Activated CD8-positive, alpha-beta T cell treated with anti-CD3 and anti-CD28 coated beads, Interleukin-2, amount 10 ng/mL, durations not matched to agents 7 days and 5 days (primary cell): ENCODE measurements at regions of chr15 and their contacts with region 1.

Region 1: GRCh38 chr15:48975472-48976419 is 12.0 kb upstream of the SHC4 start:
- DNase-seq: peak; percentile 82
- ATAC-seq: peak; percentile 99
- H3K4me3 Mint-ChIP-seq: peak overlapping the region; percentile 58
- H3K27ac Mint-ChIP-seq: peak overlapping the region; percentile 51
- H3K4me1 Mint-ChIP-seq: peaks cover 11% of the 10 kb centered on the region
- H3K27me3 Mint-ChIP-seq: peaks cover 14% of the 10 kb centered on the region

Region 2: DNA sequence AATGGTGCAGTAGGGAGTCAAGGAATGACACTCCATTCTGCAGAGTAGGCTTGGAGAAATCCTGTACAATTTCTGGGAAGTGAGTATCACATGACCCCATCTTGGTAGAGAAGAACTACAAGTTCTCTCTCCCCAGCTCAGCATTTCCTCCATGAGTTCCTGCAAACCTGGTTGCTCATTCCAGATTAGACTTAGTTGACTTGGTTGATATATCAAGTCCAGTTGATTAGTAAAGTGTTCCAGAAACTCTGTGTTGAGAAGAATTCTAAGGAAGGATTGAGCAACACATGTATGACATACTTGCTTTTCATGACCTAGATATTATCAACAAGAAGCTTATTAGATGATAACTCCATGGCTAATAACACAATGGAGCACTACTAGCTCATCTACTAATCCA is 104.3 kb before region 1 on chr15:
- CTCF ChIA-PET with region 1: interaction called, 11 read pairs
- POLR2A ChIA-PET with region 1: no interaction called
- DNase-seq: no peak
- ATAC-seq: no peak
- H3K4me3 Mint-ChIP-seq: no peak overlapping the region
- H3K27ac Mint-ChIP-seq: no peak overlapping the region
- H3K4me1 Mint-ChIP-seq: peaks cover under 1% of the 10 kb centered on the region
- H3K27me3 Mint-ChIP-seq: peaks cover 27% of the 10 kb centered on the region

Region 3: GRCh38 chr15:48905847-48906246 is 69.9 kb before region 1 on chr15:
- CTCF ChIA-PET with region 1: interaction called, 11 read pairs
- POLR2A ChIA-PET with region 1: no interaction called
- DNase-seq: no peak
- ATAC-seq: no peak
- H3K4me3 Mint-ChIP-seq: no peak overlapping the region
- H3K27ac Mint-ChIP-seq: no peak overlapping the region
- H3K4me1 Mint-ChIP-seq: no peaks in the 10 kb centered on the region
- H3K27me3 Mint-ChIP-seq: peaks cover 8% of the 10 kb centered on the region

Region 4: GRCh38 chr15:48963524-48964113 is 12.1 kb before region 1 on chr15 and contains the start of gene SHC4:
- CTCF ChIA-PET with region 1: interaction called, 123 read pairs
- POLR2A ChIA-PET with region 1: interaction called, 3 read pairs
- DNase-seq: peak; percentile 41
- ATAC-seq: peak; percentile 56
- H3K4me3 Mint-ChIP-seq: peak within 1 kb of the TSS; percentile 69
- H3K27ac Mint-ChIP-seq: peak within 1 kb of the TSS; percentile 72
- H3K4me1 Mint-ChIP-seq: peaks cover 56% of the 10 kb centered on the region
- H3K27me3 Mint-ChIP-seq: peaks cover 22% of the 10 kb centered on the region
- total RNA-seq, gene SHC4: 0.65 to 0.66 TPM

Region 5: GRCh38 chr15:49046220-49047102 is 70.7 kb after region 1 on chr15 and contains the start of gene SECISBP2L:
- CTCF ChIA-PET with region 1: interaction called, 15 read pairs
- POLR2A ChIA-PET with region 1: no interaction called
- DNase-seq: peak; percentile 94
- ATAC-seq: peak; percentile 95
- H3K4me3 Mint-ChIP-seq: peak within 1 kb of the TSS; percentile 94
- H3K27ac Mint-ChIP-seq: peak within 1 kb of the TSS; percentile 86
- H3K4me1 Mint-ChIP-seq: peaks cover 22% of the 10 kb centered on the region
- H3K27me3 Mint-ChIP-seq: no peaks in the 10 kb centered on the region
- total RNA-seq, gene SECISBP2L: 28.3 to 29.2 TPM

Region 6: GRCh38 chr15:49155110-49155833 is 179.5 kb after region 1 on chr15 and contains the start of gene COPS2:
- CTCF ChIA-PET with region 1: interaction called, 11 read pairs
- POLR2A ChIA-PET with region 1: no interaction called
- DNase-seq: peak; percentile 97
- ATAC-seq: peak; percentile 94
- H3K4me3 Mint-ChIP-seq: peak within 1 kb of the TSS; percentile 99
- H3K27ac Mint-ChIP-seq: peak within 1 kb of the TSS; percentile 99
- H3K4me1 Mint-ChIP-seq: peaks cover 43% of the 10 kb centered on the region
- H3K27me3 Mint-ChIP-seq: no peaks in the 10 kb centered on the region
- total RNA-seq, gene COPS2: 55.8 to 56.8 TPM